Ascending aorta (tissue), 2 donors: ENCODE measurements at regions of chr7 and their contacts with region 1.

Region 1: DNA sequence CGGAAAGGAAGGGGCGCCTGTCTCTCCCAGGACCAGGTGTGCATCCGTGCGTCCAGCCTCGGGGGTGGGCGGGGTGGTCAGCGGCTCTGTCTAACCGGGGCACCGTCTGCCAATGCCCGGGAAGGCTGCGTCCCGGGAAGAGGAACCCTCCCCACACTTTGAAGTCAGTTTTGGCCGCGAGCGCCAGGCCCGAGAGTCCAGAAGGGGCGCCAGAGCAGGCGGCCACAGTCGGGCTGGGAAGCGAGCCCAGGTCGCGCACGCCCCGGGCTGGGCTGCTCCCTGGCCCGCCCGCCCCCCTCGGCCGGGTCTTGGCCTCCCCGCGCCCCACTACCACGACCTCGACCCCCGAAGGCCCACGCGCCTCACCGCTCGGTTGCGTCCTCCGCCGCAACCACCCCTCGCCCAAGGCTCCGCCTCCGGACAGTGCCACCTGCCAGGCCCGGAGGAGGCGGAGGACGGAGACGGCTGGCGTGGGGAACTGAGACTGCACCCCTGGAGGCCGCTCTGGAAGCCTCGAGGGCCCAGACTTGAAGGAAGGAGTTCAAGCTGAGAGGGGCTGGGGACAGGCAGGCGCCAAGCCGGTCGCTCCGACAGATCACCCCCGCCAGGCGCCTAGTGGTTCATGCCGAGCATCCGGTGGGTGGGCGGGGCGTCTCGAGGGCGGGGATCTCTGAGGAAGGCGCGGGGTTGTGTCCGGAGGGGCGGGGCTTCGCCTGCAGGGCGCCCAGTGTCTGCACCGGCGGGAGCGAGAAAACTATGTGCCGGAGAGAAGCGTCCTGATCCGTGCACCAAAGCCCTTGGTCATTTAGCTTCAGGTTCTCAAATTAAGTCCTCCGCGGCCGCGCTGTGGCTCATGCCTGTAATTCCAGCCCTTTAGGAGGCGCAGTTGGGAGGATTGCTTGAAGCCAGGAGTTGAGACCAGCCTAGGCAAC is at the start of gene BRAT1:
- DNase-seq: peak; percentile 84 to 98
- H3K4me3 ChIP-seq: peak within 1 kb of the TSS; percentile 67 to 75
- H3K27ac ChIP-seq: peak within 1 kb of the TSS; percentile 95 to 99
- H3K4me1 ChIP-seq: peaks cover 0 to 20% of the 10 kb centered on the region in 2 donors
- H3K27me3 ChIP-seq: no peaks in the 10 kb centered on the region
- CTCF ChIP-seq: peak in 1 of 3 experiments; percentile 49
- total RNA-seq, gene BRAT1: 84.0 TPM

Region 2: DNA sequence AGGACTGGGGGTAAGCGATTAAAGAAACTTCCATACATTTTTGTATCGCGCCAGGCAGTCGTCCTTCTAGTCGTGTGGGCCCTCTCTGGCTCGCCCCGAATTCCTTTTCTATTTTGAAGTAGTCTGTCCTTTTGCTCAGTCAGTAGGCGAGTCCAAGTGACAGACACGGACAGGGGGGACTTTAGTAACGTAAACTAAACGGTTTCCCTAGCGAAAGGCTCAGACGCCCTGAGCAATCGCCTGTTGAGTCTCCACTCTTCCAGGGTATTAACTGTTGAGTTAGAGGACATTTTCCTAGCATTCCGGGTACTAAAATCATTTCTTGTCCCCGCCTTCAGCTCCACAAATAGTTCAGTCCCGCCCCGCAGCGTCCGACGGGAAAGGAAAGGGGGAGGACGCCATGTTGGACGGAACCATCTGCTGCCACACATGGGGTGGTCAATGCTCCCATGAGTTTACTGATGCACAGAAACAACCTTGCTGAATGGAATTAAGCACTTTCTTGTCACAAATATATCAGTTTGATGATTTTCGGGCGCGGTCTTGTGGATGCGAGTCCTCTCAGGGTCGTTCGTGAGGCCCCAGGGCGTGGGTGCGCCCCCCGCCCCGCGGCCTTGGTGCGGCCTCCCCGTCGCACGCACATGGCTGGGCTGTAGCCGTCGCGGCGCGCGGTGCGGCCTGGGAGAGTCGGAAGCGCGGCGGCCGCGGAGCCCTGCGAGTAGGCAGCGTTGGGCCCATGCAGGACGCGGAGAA is 201.0 kb before region 1 on chr7 and contains the start of gene EIF3B:
- intact Hi-C with region 1: loop called (anchors 1 kb)
- DNase-seq: peak; percentile 53 to 92
- H3K4me3 ChIP-seq: peak within 1 kb of the TSS; percentile 91
- H3K27ac ChIP-seq: peak within 1 kb of the TSS; percentile 98 to 99
- H3K4me1 ChIP-seq: peaks cover 16 to 21% of the 10 kb centered on the region in 2 donors
- H3K27me3 ChIP-seq: no peaks in the 10 kb centered on the region
- CTCF ChIP-seq: peak in 1 of 3 experiments; percentile 16
- total RNA-seq, gene EIF3B: 84.9 TPM

Region 3: GRCh38 chr7:2451171-2452073 is 104.0 kb before region 1 on chr7:
- intact Hi-C with region 1: loop called (anchors 5 kb)
- DNase-seq: peak in 1 of 2 donors; percentile 88
- H3K4me3 ChIP-seq: peak overlapping the region; percentile 37 to 66
- H3K27ac ChIP-seq: no peak overlapping the region
- H3K4me1 ChIP-seq: peaks cover 4 to 6% of the 10 kb centered on the region in 2 donors
- H3K27me3 ChIP-seq: no peaks in the 10 kb centered on the region
- CTCF ChIP-seq: peak; percentile 79 to 88 (median 84)

Region 4: GRCh38 chr7:2508327-2509215 is 46.8 kb before region 1 on chr7:
- intact Hi-C with region 1: no loop called
- DNase-seq: no peak
- H3K4me3 ChIP-seq: no peak overlapping the region
- H3K27ac ChIP-seq: no peak overlapping the region
- H3K4me1 ChIP-seq: peaks cover 0 to 4% of the 10 kb centered on the region in 2 donors
- H3K27me3 ChIP-seq: no peaks in the 10 kb centered on the region
- CTCF ChIP-seq: no peak

Region 5: DNA sequence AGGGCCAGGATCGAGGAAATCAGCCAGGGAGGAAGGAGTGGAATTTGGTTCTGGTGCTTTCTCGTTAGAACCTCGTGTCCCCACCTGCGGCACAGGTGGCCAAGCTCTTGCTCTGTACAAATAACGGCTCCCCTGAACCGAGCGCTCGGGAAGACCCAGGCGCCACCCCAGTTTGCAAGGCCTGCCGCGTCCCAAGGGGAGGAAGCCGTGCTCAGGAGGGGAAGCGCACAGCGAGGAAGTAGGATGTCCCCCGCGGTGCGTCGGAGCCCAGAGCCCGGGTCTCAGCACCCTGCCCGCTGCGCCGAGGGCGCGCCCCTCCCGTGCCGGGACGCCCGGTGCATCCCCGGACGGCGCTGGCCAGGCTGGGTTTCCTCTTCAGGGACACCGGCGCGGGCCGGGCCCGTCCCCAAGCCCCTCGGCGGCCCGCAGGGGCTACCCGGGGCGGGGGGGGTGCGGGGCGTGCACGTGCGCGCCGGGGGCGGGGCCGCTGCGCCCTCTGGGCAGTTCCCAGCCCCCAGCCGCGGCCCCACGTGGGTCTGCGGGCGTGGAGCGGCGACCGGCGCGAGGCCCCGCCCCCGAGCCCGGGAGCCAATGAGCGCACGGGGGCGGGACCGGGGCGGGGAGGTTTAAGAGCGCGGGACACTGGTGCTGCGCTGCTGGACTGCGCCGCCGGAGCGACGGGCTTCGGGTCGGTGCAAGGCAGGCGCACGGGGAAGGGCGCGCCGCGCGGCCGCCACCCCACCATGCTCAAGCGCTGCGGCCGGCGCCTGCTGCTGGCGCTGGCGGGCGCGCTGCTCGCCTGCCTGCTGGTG is 36.1 kb before region 1 on chr7 and contains the start of gene LFNG:
- intact Hi-C with region 1: loop called (anchors 5 kb)
- DNase-seq: peak in 1 of 2 donors; percentile 91
- H3K4me3 ChIP-seq: peak within 1 kb of the TSS; percentile 72 to 74
- H3K27ac ChIP-seq: no peak within 1 kb of the TSS
- H3K4me1 ChIP-seq: peaks cover 6 to 25% of the 10 kb centered on the region in 2 donors
- H3K27me3 ChIP-seq: peaks cover 15% of the 10 kb centered on the region
- CTCF ChIP-seq: no peak
- total RNA-seq, gene LFNG: 102 TPM

Region 6: GRCh38 chr7:2621061-2621828 is 65.9 kb after region 1 on chr7:
- intact Hi-C with region 1: no loop called
- DNase-seq: no peak
- H3K4me3 ChIP-seq: no peak overlapping the region
- H3K27ac ChIP-seq: no peak overlapping the region
- H3K4me1 ChIP-seq: peaks cover 13 to 41% of the 10 kb centered on the region in 2 donors
- H3K27me3 ChIP-seq: no peaks in the 10 kb centered on the region
- CTCF ChIP-seq: no peak

Region 7: DNA sequence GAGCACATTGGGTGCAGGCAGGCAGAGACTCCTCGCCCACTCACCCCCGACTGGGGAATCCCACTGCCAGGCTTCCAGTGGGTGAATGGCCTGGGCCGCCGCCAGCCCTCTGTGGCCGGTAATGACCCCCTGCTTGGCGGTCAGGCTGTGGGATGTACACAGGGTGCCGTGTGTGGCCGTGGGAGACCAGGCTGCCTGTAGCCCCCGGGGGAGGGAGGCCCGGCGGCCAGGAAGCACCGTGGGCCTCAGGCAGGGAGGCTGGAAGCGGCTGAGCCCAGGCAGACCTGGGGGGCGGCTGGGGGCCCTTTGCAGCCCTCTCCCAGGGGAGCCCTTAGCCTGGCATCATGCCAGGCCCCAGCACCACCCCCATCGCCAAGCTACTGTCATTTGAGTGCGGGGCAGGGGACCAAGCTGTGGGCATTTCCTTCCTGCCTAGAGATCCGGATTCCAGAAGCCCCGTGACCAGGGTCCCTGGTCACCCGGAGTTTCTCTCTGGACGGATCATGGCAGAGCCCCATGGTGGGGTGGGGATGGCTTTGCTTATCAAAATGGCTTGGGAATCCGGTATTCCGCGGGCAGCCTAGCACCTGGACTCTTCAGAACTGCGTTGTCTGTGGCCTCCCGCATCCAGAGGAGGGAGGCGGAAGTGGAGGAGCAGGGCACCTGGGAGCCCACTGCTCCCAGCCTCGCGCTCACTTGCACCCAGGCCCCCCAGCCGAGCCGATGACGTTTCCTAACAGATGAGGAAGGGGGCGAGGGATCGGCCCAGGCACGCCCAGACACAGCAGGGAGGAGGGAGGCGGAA is 77.5 kb after region 1 on chr7:
- intact Hi-C with region 1: loop called (anchors 1 kb)
- DNase-seq: peak; percentile 54 to 84
- H3K4me3 ChIP-seq: peak overlapping the region; percentile 76 to 85
- H3K27ac ChIP-seq: peak overlapping the region; percentile 80 to 87
- H3K4me1 ChIP-seq: peaks cover 20 to 36% of the 10 kb centered on the region in 2 donors
- H3K27me3 ChIP-seq: no peaks in the 10 kb centered on the region
- CTCF ChIP-seq: no peak

Region 8: GRCh38 chr7:2660585-2661408 is 105.4 kb after region 1 on chr7:
- intact Hi-C with region 1: no loop called
- DNase-seq: no peak
- H3K4me3 ChIP-seq: no peak overlapping the region
- H3K27ac ChIP-seq: no peak overlapping the region
- H3K4me1 ChIP-seq: no peaks in the 10 kb centered on the region
- H3K27me3 ChIP-seq: no peaks in the 10 kb centered on the region
- CTCF ChIP-seq: peak in 1 of 3 experiments; percentile 33